ENCODE measurements at regions of chr1 and their contacts with region 1.

Region 1: GRCh38 chr1:157992031-157992832 is 1.2 kb upstream of the KIRREL1 start:
- DNase-seq: peak in 3 of 4 donors; percentile 46 to 82 (median 70)
- ATAC-seq: peak; percentile 80
- H3K4me3 ChIP-seq: no peak overlapping the region
- H3K27ac ChIP-seq: peak overlapping the region in 1 of 2 donors; percentile 15
- H3K4me1 ChIP-seq: peaks cover 0 to 16% of the 10 kb centered on the region in 2 donors
- H3K27me3 ChIP-seq: peaks cover 0 to 39% of the 10 kb centered on the region in 2 donors
- CTCF ChIP-seq: peak; percentile 75 to 90

Region 2: DNA sequence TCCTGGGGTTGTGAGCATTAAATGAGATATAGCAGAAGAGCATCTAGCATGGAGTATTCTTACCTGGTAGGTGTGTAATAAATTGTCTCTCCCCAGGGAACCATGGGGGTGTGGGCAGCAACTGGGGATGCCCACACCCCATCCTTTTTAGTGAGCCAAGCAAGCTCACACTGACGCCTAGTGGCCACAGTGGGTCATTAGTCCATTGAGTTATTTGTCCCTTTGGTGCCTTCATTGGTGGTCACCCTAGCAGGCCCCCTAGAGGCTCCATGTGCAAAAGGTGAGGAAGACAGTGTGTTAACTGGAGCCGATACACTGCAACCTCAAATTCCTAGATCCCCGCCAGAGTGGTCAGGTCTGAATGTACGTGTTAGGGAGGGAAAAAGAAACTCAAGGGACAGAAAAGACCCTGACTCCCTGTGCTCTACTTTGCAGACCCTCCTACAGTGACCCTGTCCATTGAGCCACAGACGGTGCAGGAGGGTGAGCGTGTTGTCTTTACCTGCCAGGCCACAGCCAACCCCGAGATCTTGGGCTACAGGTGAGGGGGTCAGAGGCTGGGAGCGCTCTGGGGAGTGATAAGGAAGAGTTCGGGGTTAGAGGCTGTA is 95.2 kb after region 1 on chr1:
- intact Hi-C with region 1: loop called (anchors 10 kb)
- DNase-seq: peak in 2 of 4 donors; percentile 59 to 82
- ATAC-seq: peak; percentile 82
- H3K4me3 ChIP-seq: no peak overlapping the region
- H3K27ac ChIP-seq: no peak overlapping the region
- H3K4me1 ChIP-seq: no peaks in the 10 kb centered on the region
- H3K27me3 ChIP-seq: no peaks in the 10 kb centered on the region
- CTCF ChIP-seq: peak; percentile 64 to 86

Region 3: GRCh38 chr1:158095737-158096335 is 103.6 kb after region 1 on chr1:
- intact Hi-C with region 1: loop called in 1 of 2 experiments (anchors 10 kb)
- DNase-seq: no peak
- ATAC-seq: peak; percentile 54
- H3K4me3 ChIP-seq: no peak overlapping the region
- H3K27ac ChIP-seq: no peak overlapping the region
- H3K4me1 ChIP-seq: no peaks in the 10 kb centered on the region
- H3K27me3 ChIP-seq: no peaks in the 10 kb centered on the region
- CTCF ChIP-seq: peak; percentile 51 to 70